Right cardiac atrium (tissue), 5 donors: ENCODE measurements at regions of chr9 and their contacts with region 1.

Region 1: GRCh38 chr9:100598641-100599145 is 20.8 kb downstream of the CAVIN4 start:
- DNase-seq: peak; percentile 85 to 94 (median 92)
- ATAC-seq: peak; percentile 85 to 90
- H3K4me3 ChIP-seq: peak overlapping the region; percentile 57
- H3K27ac ChIP-seq: no peak overlapping the region
- H3K4me1 ChIP-seq: no peaks in the 10 kb centered on the region
- H3K27me3 ChIP-seq: no peaks in the 10 kb centered on the region

Region 2: GRCh38 chr9:99162759-99163364 is 1435.8 kb before region 1 on chr9:
- intact Hi-C with region 1: loop called in 1 of 4 experiments (anchors 10 kb)
- DNase-seq: no peak
- ATAC-seq: no peak
- H3K4me3 ChIP-seq: no peak overlapping the region
- H3K27ac ChIP-seq: no peak overlapping the region
- H3K4me1 ChIP-seq: no peaks in the 10 kb centered on the region
- H3K27me3 ChIP-seq: no peaks in the 10 kb centered on the region

Region 3: GRCh38 chr9:99628849-99629620 is 969.7 kb before region 1 on chr9:
- intact Hi-C with region 1: no loop called
- DNase-seq: no peak
- ATAC-seq: no peak
- H3K4me3 ChIP-seq: no peak overlapping the region
- H3K27ac ChIP-seq: no peak overlapping the region
- H3K4me1 ChIP-seq: no peaks in the 10 kb centered on the region
- H3K27me3 ChIP-seq: no peaks in the 10 kb centered on the region

Region 4: GRCh38 chr9:100322954-100323536 is 275.6 kb before region 1 on chr9:
- intact Hi-C with region 1: loop called in 1 of 4 experiments (anchors 10 kb)
- DNase-seq: peak in 2 of 3 donors; percentile 14 to 53
- ATAC-seq: no peak
- H3K4me3 ChIP-seq: no peak overlapping the region
- H3K27ac ChIP-seq: no peak overlapping the region
- H3K4me1 ChIP-seq: no peaks in the 10 kb centered on the region
- H3K27me3 ChIP-seq: no peaks in the 10 kb centered on the region

Region 5: GRCh38 chr9:100505564-100506159 is 93.0 kb before region 1 on chr9:
- intact Hi-C with region 1: loop called in 2 of 4 experiments (anchors 5 to 10 kb)
- DNase-seq: peak; percentile 59 to 86 (median 74)
- ATAC-seq: no peak
- H3K4me3 ChIP-seq: no peak overlapping the region
- H3K27ac ChIP-seq: no peak overlapping the region
- H3K4me1 ChIP-seq: no peaks in the 10 kb centered on the region
- H3K27me3 ChIP-seq: no peaks in the 10 kb centered on the region

Region 6: GRCh38 chr9:101311758-101312420 is 713.2 kb after region 1 on chr9:
- intact Hi-C with region 1: loop called in 3 of 4 experiments (anchors 2 to 5 kb)
- DNase-seq: no peak
- ATAC-seq: peak in 1 of 2 donors; percentile 40
- H3K4me3 ChIP-seq: no peak overlapping the region
- H3K27ac ChIP-seq: no peak overlapping the region
- H3K4me1 ChIP-seq: no peaks in the 10 kb centered on the region
- H3K27me3 ChIP-seq: no peaks in the 10 kb centered on the region